Gastrocnemius medialis (tissue), 4 donors: ENCODE measurements at regions of chr20 and their contacts with region 1.

Region 1: DNA sequence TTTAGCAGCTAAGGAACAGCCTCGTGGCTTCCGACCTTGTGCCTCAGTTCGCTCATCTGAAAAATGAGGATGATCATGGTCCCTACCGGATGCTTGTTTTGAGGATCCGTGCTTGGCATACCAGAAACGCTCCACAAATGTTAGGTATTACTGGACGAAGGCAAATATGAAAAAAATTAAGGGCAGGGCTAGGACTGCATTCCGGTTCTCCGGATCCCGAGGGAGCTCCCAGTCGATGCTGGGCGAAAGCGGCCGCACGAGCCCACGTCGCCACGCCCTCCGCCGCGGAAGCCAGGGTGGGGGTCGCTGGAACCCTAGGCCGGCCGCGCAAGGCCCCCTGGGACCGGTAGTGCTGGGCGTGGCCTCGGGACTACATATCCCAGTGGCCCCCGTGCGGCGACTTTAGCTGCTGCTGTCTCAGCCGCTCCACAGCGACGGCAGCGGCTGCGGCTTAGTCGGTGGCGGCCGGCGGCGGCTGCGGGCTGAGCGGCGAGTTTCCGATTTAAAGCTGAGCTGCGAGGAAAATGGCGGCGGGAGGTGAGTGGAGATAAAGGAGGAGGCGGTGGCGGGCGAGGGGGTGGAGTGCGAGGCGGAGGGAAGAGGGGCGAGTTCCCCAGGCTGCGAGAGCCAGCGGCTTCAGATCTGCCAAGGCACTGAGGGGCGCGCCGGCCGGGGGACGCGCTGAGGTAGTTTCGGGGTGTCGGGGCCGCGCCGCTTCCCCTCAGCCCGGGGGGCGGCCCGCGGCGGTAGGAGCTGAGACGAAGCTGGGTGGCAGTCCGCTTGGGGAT is at the start of gene NCOA3:
- DNase-seq: peak; percentile 90
- ATAC-seq: peak; percentile 84 to 91
- H3K4me3 ChIP-seq: peak within 1 kb of the TSS; percentile 88 to 100 (median 98)
- H3K27ac ChIP-seq: peak within 1 kb of the TSS; percentile 93 to 98 (median 98)
- H3K4me1 ChIP-seq: peaks cover 28 to 37% of the 10 kb centered on the region in 2 donors
- H3K27me3 ChIP-seq: no peaks in the 10 kb centered on the region
- CTCF ChIP-seq: peak; percentile 71 to 87 (median 79)
- POLR2A ChIP-seq: peak; percentile 96 to 98
- total RNA-seq, gene NCOA3: 52.5 to 86.1 (median 70.1) TPM

Region 2: DNA sequence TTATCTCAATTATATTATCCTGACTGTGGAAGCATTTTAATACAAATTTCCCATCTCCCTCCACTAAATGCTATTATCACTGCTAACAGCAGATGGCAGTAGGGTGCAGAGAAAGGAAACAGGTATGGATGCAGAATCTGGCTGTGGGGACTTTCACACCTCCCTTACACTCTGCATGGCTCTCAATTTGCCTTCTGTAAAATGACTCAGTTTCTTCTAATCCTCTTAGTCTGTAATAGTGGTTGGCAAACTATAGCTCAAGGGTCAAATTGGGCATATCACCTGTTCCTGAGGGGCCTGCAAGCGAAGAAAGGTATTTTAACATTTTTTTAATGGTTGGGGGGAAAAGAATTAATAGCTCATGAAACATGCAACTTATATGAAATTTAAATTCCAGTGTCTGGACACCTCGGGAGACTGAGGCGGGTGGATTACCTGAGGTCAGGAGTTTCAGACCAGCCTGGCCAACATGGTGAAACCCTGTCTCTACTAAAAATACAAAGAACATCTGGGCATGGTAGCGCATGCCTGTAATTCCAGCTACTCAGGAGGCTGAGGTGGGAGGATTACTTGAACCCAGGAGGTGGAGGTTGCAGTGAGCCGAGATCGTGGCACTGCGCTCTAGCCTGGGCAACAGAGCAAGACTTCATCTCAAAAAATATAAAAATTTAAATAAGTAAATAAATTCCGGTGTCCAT is 228.6 kb before region 1 on chr20:
- in situ Hi-C with region 1: no loop called
- intact Hi-C with region 1: loop called (anchors 5 kb)
- DNase-seq: peak in 1 of 2 donors; percentile 23
- ATAC-seq: peak; percentile 69 to 78
- H3K4me3 ChIP-seq: no peak overlapping the region
- H3K27ac ChIP-seq: peak overlapping the region; percentile 63 to 80 (median 78)
- H3K4me1 ChIP-seq: peaks cover 32 to 37% of the 10 kb centered on the region in 2 donors
- H3K27me3 ChIP-seq: no peaks in the 10 kb centered on the region
- CTCF ChIP-seq: peak; percentile 88 to 95 (median 93)
- POLR2A ChIP-seq: no peak

Region 3: GRCh38 chr20:47411161-47411560 is 90.5 kb before region 1 on chr20:
- in situ Hi-C with region 1: no loop called
- intact Hi-C with region 1: loop called (anchors 5 kb)
- DNase-seq: peak; percentile 75 to 79
- ATAC-seq: peak; percentile 92 to 96
- H3K4me3 ChIP-seq: peak overlapping the region; percentile 15 to 50 (median 44)
- H3K27ac ChIP-seq: peak overlapping the region; percentile 91 to 94 (median 91)
- H3K4me1 ChIP-seq: peaks cover 23 to 54% of the 10 kb centered on the region in 2 donors
- H3K27me3 ChIP-seq: no peaks in the 10 kb centered on the region
- CTCF ChIP-seq: no peak
- POLR2A ChIP-seq: peak; percentile 63 to 83

Region 4: GRCh38 chr20:47464380-47465101 is 37.1 kb before region 1 on chr20:
- in situ Hi-C with region 1: no loop called
- intact Hi-C with region 1: loop called (anchors 2 kb)
- DNase-seq: peak; percentile 91 to 92
- ATAC-seq: peak; percentile 90 to 95
- H3K4me3 ChIP-seq: peak overlapping the region in 1 of 4 donors; percentile 17
- H3K27ac ChIP-seq: peak overlapping the region; percentile 84 to 95 (median 90)
- H3K4me1 ChIP-seq: peaks cover 22 to 33% of the 10 kb centered on the region in 2 donors
- H3K27me3 ChIP-seq: no peaks in the 10 kb centered on the region
- CTCF ChIP-seq: peak; percentile 59 to 85 (median 76)
- POLR2A ChIP-seq: peak; percentile 22 to 55

Region 5: GRCh38 chr20:47515843-47516242 is 14.2 kb after region 1 on chr20:
- in situ Hi-C with region 1: no loop called
- intact Hi-C with region 1: no loop called
- DNase-seq: no peak
- ATAC-seq: no peak
- H3K4me3 ChIP-seq: no peak overlapping the region
- H3K27ac ChIP-seq: no peak overlapping the region
- H3K4me1 ChIP-seq: peaks cover 0 to 16% of the 10 kb centered on the region in 2 donors
- H3K27me3 ChIP-seq: no peaks in the 10 kb centered on the region
- CTCF ChIP-seq: no peak
- POLR2A ChIP-seq: no peak

Region 6: GRCh38 chr20:47568001-47568407 is 66.3 kb after region 1 on chr20:
- in situ Hi-C with region 1: loop called in 1 of 4 experiments (anchors 10 kb)
- intact Hi-C with region 1: loop called (anchors 5 kb)
- DNase-seq: no peak
- ATAC-seq: peak in 1 of 2 donors; percentile 11
- H3K4me3 ChIP-seq: no peak overlapping the region
- H3K27ac ChIP-seq: peak overlapping the region; percentile 55 to 88 (median 83)
- H3K4me1 ChIP-seq: peaks cover 51 to 57% of the 10 kb centered on the region in 2 donors
- H3K27me3 ChIP-seq: no peaks in the 10 kb centered on the region
- CTCF ChIP-seq: no peak
- POLR2A ChIP-seq: no peak

Region 7: GRCh38 chr20:47620808-47621805 is 119.4 kb after region 1 on chr20:
- in situ Hi-C with region 1: loop called in 2 of 4 experiments (anchors 10 to 25 kb)
- intact Hi-C with region 1: loop called (anchors 5 kb)
- DNase-seq: no peak
- ATAC-seq: peak in 1 of 2 donors; percentile 53
- H3K4me3 ChIP-seq: no peak overlapping the region
- H3K27ac ChIP-seq: peak overlapping the region; percentile 19 to 40 (median 30)
- H3K4me1 ChIP-seq: peaks cover 13 to 25% of the 10 kb centered on the region in 2 donors
- H3K27me3 ChIP-seq: no peaks in the 10 kb centered on the region
- CTCF ChIP-seq: peak; percentile 61 to 92 (median 84)
- POLR2A ChIP-seq: no peak